HepG2 (cell line): ENCODE measurements at regions of chr22 and their contacts with region 1.

Region 1: DNA sequence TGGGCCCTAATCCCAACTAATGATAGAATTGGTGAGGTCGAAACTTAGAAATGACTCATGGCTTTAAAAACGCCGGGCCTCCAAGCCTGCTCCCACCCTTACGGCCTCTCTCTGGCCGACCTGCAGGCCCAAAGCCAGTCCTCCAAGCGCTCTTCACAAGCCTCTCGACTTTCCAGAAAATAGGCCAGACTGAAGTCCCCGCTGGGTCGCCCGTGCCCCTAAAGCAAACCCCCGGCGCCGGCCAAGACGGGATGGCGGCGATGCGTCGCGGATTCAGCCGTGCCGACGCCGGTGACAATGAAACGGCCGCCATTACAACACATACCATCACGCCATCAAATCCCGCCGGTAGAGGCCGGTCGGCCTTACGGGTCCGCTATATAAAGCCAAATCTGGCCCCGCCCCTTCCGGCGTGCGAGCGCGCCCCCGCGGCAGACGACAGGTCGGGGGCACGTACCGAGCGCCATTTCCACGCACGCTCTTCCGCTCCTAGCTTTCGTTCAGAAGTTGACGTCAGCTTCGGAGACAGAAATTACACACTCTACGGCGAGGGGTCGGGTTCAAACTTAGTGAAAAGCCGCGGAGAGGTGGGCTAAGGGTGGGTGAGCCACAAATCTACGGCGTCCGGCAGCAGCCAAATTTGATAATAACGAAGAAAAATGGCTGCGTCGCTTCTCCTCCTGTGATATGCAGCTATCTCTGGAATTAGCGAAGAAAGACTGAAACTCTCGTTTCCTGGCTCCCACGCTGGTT is at the start of gene RPL3:
- DNase-seq: peak; percentile 98
- ATAC-seq: peak; percentile 65
- H3K4me3 ChIP-seq: peak within 1 kb of the TSS; percentile 76 to 94 (median 87)
- H3K27ac ChIP-seq: peak within 1 kb of the TSS; percentile 97
- H3K4me1 ChIP-seq: peaks cover 51% of the 10 kb centered on the region
- H3K27me3 ChIP-seq: no peaks in the 10 kb centered on the region; a peak in 1 of 5 replicates
- CTCF ChIP-seq: peak; percentile 42; the same call in 1 of the 2 replicates
- EP300 ChIP-seq: peak in 1 of 2 experiments; percentile 4; a peak in 1 of 4 replicates
- POLR2A ChIP-seq: peak; percentile 99 to 100
- RAD21 ChIP-seq: peak; percentile 52; the same call in 1 of the 2 replicates
- total RNA-seq, gene RPL3: 1,051 and 1,499 TPM in 2 replicates

Region 2: DNA sequence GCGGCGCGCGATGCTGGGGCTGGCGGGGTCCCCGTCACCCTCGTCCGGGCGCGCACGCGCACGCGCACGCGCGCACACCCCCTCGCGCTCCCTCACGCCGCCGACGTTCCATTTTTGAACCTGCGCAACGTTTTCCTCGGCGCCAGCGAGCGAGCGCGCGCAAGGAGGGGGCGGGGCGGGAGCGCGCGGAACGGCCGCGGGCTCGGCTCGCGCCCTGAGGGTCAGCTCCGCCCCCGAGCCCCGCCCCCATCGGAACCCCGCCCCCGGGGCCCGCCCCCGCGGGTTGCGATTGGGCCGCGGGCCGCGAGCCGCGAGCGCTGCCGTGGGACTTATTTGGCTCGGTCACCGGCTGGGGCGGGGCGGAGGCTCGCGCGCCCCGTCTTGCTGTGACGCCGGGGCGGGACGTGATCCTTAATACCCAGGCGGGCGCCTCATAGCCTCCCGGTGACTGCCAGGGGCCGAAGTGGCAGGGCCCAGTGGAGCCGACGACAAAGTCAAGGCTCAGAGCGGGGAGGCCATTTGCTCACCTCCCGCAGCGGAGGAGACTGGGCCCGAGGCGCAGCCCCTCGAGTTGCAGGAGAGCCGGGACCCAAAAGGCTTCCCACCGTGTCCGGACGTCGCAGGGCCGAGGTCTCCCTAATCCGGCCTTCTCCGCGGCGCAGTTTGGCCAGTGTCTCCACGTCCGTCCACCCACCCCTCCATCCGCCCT is 166.8 kb before region 1 on chr22 and contains the start of gene CBX7:
- CTCF ChIA-PET with region 1: no interaction called
- POLR2A ChIA-PET with region 1: interaction called, 38 read pairs
- in situ Hi-C with region 1: no loop called
- intact Hi-C with region 1: no loop called
- DNase-seq: peak; percentile 49
- ATAC-seq: peak; percentile 72
- H3K4me3 ChIP-seq: peak within 1 kb of the TSS; percentile 59 to 79 (median 67)
- H3K27ac ChIP-seq: no peak within 1 kb of the TSS
- H3K4me1 ChIP-seq: peaks cover 44% of the 10 kb centered on the region
- H3K27me3 ChIP-seq: peaks cover 2 to 33% of the 10 kb centered on the region in 2 experiments; a peak in 4 of 5 replicates
- CTCF ChIP-seq: no peak
- EP300 ChIP-seq: no peak
- POLR2A ChIP-seq: no peak
- RAD21 ChIP-seq: no peak
- total RNA-seq, gene CBX7: 0.20 and 0.35 TPM in 2 replicates

Region 3: DNA sequence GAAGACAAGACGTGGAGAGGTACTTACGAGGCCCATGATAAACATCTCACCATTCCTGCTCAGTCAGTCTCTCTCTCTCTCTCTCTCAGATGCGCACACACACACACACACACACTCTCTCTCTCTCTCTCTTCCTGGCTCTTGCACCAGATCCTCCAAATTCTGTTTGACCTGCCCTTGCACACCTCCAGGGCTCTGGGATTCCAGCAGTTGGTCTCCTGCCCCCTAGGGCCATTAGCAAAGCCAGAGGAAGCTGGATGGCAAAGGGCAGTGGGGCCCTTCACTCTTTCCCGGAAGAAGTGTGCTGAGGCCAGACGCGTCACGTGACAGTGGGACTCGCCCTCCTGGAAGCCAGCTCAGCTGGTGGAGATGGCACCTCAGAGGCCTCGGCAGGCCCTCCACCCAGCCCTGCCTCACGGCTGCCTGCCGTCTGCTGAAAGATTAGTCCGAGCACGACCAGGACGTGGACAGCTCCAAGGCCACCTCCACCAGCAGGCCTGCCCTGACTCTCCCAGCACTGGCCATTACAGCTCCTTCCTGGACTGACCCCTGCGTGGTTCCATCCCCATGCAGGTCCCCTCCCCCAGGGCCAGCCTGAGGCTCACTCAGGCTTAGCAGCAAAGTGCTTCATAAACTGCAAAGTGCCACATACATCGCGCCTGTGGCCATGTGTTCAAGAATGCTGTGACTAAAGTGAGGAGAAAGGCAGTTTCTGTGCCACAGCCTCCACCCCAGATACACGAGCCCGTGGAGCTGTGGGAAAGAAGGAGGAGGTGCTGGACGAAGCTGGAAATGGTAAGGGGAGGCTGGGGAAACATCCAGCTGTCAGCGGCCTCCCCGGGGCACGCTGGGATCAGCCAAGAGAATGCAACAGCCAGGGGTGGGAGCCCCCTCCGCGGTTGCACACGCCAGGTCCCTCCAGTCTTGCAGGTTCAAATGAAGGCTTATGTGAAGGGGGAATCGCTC is 78.3 kb before region 1 on chr22:
- CTCF ChIA-PET with region 1: no interaction called
- POLR2A ChIA-PET with region 1: interaction called, 93 read pairs
- in situ Hi-C with region 1: no loop called
- intact Hi-C with region 1: loop called (anchors 5 kb)
- DNase-seq: peak; percentile 91
- ATAC-seq: peak; percentile 55
- H3K4me3 ChIP-seq: peak overlapping the region; percentile 67 to 88 (median 75)
- H3K27ac ChIP-seq: peak overlapping the region; percentile 93
- H3K4me1 ChIP-seq: peaks cover 35% of the 10 kb centered on the region
- H3K27me3 ChIP-seq: no peaks in the 10 kb centered on the region; a peak in 1 of 5 replicates
- CTCF ChIP-seq: peak; percentile 61
- EP300 ChIP-seq: peak in 1 of 2 experiments; percentile 55; a peak in 2 of 4 replicates
- POLR2A ChIP-seq: peak; percentile 49 to 80; a peak in 3 of 4 replicates
- RAD21 ChIP-seq: peak; percentile 52

Region 4: GRCh38 chr22:39300186-39300830 is 19.1 kb before region 1 on chr22:
- CTCF ChIA-PET with region 1: no interaction called
- POLR2A ChIA-PET with region 1: interaction called, 55 read pairs
- in situ Hi-C with region 1: no loop called
- intact Hi-C with region 1: no loop called
- DNase-seq: no peak
- ATAC-seq: peak; percentile 55
- H3K4me3 ChIP-seq: peak overlapping the region; percentile 40 to 68 (median 43)
- H3K27ac ChIP-seq: peak overlapping the region; percentile 32
- H3K4me1 ChIP-seq: peaks cover 97% of the 10 kb centered on the region
- H3K27me3 ChIP-seq: no peaks in the 10 kb centered on the region; a peak in 2 of 5 replicates
- CTCF ChIP-seq: peak; percentile 25; the same call in 1 of the 2 replicates
- EP300 ChIP-seq: no peak
- POLR2A ChIP-seq: no peak
- RAD21 ChIP-seq: no peak

Region 5: GRCh38 chr22:39343259-39344048 is 24.0 kb after region 1 on chr22:
- CTCF ChIA-PET with region 1: no interaction called
- POLR2A ChIA-PET with region 1: interaction called, 16 read pairs
- in situ Hi-C with region 1: no loop called
- intact Hi-C with region 1: no loop called
- DNase-seq: peak; percentile 70
- ATAC-seq: peak; percentile 97
- H3K4me3 ChIP-seq: no peak overlapping the region
- H3K27ac ChIP-seq: no peak overlapping the region
- H3K4me1 ChIP-seq: peaks cover 9% of the 10 kb centered on the region
- H3K27me3 ChIP-seq: no peaks in the 10 kb centered on the region
- CTCF ChIP-seq: peak; percentile 83
- EP300 ChIP-seq: no peak
- POLR2A ChIP-seq: no peak
- RAD21 ChIP-seq: peak; percentile 29; the same call in 1 of the 2 replicates

Region 6: DNA sequence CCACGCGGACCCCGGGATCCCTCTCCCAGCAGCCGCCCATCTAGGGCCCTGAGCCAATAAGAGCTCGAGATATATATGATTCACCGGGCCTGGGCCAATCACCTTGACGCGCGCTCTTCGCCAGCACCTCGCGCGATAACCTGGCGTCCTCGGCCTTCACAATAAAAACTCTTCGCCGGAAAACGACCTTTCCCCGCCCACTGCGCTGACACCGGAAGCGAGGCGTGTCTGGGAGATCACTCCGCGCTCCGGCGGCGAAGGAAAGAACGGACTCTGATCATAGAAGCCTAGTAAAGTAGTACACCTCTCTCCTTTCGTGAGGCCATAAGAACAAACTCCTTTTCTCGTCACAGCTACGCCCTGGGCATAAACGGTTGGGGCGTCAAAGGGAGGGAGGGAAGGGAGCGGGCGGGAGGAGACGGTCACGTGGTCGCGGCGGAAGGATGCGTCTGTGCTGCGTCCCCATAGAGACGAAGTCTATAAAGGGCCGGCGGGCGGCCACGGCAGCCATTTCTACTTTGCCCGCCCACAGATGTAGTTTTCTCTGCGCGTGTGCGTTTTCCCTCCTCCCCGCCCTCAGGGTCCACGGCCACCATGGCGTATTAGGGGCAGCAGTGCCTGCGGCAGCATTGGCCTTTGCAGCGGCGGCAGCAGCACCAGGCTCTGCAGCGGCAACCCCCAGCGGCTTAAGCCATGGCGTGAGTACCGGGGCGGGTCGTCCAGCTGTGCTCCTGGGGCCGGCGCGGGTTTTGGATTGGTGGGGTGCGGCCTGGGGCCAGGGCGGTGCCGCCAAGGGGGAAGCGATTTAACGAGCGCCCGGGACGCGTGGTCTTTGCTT is 200.8 kb after region 1 on chr22 and contains the start of gene ATF4:
- CTCF ChIA-PET with region 1: no interaction called
- POLR2A ChIA-PET with region 1: interaction called, 25 read pairs
- in situ Hi-C with region 1: no loop called
- intact Hi-C with region 1: no loop called
- DNase-seq: peak; percentile 98
- ATAC-seq: peak; percentile 87
- H3K4me3 ChIP-seq: peak within 1 kb of the TSS; percentile 98 to 100 (median 100)
- H3K27ac ChIP-seq: peak within 1 kb of the TSS; percentile 100
- H3K4me1 ChIP-seq: peaks cover 50% of the 10 kb centered on the region
- H3K27me3 ChIP-seq: no peaks in the 10 kb centered on the region; a peak in 1 of 5 replicates
- CTCF ChIP-seq: no peak
- EP300 ChIP-seq: no peak
- POLR2A ChIP-seq: peak; percentile 97 to 98
- RAD21 ChIP-seq: no peak
- total RNA-seq, gene ATF4: 442 and 486 TPM in 2 replicates